Mammary epithelial cell (primary cell): ENCODE measurements at regions of chr1 and their contacts with region 1.

Region 1: DNA sequence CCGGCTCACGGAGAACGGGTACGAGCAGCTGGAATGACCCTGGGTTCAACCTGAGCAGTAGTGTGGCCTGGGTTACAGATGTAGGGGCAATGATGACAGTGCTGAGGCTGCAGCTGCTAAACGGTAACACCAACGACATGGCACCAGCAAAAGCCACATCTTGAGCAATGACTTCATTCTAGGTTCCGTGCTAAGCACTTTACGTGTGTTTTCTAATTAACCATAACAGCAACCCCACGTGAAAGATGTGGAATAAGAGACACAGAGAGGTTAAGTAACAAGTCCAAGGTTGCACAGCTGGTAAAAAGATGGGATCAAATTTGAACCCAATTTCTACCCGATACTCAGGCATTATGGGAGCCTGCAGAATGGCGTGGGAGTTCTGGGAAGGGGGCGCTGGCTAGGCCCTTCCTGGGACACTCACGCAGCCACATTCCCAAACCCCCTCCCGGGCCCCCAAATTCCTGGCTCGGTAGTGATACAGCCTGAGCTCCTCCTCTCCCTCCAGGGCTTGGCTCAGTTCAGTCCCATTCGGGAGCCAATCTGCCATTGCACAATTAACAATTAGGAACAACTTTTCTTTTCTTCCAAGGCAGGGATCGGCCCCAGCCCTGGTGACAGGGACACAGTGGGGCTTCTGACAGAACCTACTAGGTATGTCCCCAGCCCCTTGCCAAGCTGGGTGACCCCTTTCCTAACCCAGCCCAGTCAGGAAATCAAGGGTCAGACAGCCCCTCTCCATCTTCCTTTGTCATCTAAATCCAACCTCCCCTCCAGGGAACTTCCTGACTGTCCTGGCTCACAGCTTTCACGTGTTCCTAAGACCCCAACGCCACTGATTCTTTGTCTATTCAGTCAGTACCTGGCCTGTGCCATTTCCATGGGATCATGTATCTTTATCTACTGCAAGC is 23.9 kb upstream of the ECE1 start:
- DNase-seq: no peak
- H3K4me3 ChIP-seq: no peak overlapping the region
- H3K27ac ChIP-seq: no peak overlapping the region
- H3K4me1 ChIP-seq: peaks cover 30% of the 10 kb centered on the region
- H3K27me3 ChIP-seq: no peaks in the 10 kb centered on the region
- CTCF ChIP-seq: no peak

Region 2: GRCh38 chr1:21229246-21230000 is 84.7 kb before region 1 on chr1:
- CTCF ChIA-PET with region 1: no interaction called
- dilution Hi-C with region 1: no loop called
- in situ Hi-C with region 1: no loop called
- intact Hi-C with region 1: no loop called
- DNase-seq: peak; percentile 58
- H3K4me3 ChIP-seq: no peak overlapping the region
- H3K27ac ChIP-seq: no peak overlapping the region
- H3K4me1 ChIP-seq: no peaks in the 10 kb centered on the region
- H3K27me3 ChIP-seq: no peaks in the 10 kb centered on the region
- CTCF ChIP-seq: no peak

Region 3: GRCh38 chr1:21324368-21325141 is 10.4 kb after region 1 on chr1:
- CTCF ChIA-PET with region 1: no interaction called
- dilution Hi-C with region 1: no loop called
- in situ Hi-C with region 1: no loop called
- intact Hi-C with region 1: loop called (anchors 1 kb)
- DNase-seq: peak; percentile 96
- H3K4me3 ChIP-seq: no peak overlapping the region
- H3K27ac ChIP-seq: peak overlapping the region; percentile 63
- H3K4me1 ChIP-seq: peaks cover 48% of the 10 kb centered on the region
- H3K27me3 ChIP-seq: no peaks in the 10 kb centered on the region
- CTCF ChIP-seq: no peak

Region 4: DNA sequence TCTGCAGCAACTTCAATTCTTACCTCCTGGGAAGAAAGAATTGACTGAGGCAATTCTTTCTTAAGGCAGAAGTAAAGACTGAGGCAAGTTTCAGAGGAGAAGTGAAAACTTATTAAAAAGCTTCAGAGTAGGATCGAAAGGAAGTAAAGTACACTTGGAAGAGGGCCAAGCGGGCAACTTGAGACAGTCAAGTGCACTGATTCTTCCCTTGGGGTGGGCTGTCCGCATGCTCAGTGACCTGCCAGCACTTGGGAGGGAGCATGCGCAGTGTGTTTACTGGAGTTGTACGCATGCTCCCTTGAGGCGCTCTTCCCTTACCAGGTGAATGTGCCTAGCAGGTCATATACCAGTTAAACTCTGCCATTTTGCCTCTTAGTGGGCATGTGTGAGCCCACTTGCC is 70.5 kb after region 1 on chr1:
- CTCF ChIA-PET with region 1: no interaction called
- dilution Hi-C with region 1: no loop called
- in situ Hi-C with region 1: no loop called
- intact Hi-C with region 1: no loop called
- DNase-seq: no peak
- H3K4me3 ChIP-seq: no peak overlapping the region
- H3K27ac ChIP-seq: no peak overlapping the region
- H3K4me1 ChIP-seq: no peaks in the 10 kb centered on the region
- H3K27me3 ChIP-seq: no peaks in the 10 kb centered on the region
- CTCF ChIP-seq: no peak